ENCODE measurements at regions of chr10 and their contacts with region 1.

Region 1: DNA sequence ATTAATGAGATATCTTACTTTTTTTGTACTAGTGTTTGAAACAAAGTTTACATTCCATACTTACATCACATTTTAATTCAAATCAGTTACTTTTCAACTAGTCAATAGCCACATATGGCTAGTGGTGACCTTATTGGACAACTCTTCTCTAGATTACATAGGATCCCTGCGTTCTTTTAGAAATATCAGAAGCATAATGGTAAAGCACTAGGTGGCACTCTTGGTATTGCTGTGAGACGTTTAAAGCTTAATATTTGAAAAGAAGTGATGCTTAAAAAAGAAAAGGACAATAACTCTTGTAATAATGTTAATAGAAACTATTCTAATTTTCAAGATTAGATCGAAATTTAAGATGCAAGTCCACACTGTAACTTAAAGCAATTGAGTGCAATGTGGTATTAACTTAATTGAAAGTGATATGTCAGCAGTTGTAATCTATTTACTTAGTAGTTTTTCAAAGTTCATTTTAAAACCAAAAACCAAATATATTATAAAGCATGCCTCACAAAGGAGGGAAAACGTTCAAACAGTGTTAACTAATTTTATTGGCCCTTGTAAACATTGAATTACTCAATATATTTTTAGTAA is 339.1 kb downstream of the ATRNL1 start:
- DNase-seq: peak; percentile 25
- H3K4me3 Mint-ChIP-seq: no peak overlapping the region
- H3K27ac Mint-ChIP-seq: no peak overlapping the region
- H3K4me1 Mint-ChIP-seq: no peaks in the 10 kb centered on the region
- H3K27me3 Mint-ChIP-seq: peaks cover 31% of the 10 kb centered on the region
- CTCF ChIP-seq: peak; percentile 43

Region 2: DNA sequence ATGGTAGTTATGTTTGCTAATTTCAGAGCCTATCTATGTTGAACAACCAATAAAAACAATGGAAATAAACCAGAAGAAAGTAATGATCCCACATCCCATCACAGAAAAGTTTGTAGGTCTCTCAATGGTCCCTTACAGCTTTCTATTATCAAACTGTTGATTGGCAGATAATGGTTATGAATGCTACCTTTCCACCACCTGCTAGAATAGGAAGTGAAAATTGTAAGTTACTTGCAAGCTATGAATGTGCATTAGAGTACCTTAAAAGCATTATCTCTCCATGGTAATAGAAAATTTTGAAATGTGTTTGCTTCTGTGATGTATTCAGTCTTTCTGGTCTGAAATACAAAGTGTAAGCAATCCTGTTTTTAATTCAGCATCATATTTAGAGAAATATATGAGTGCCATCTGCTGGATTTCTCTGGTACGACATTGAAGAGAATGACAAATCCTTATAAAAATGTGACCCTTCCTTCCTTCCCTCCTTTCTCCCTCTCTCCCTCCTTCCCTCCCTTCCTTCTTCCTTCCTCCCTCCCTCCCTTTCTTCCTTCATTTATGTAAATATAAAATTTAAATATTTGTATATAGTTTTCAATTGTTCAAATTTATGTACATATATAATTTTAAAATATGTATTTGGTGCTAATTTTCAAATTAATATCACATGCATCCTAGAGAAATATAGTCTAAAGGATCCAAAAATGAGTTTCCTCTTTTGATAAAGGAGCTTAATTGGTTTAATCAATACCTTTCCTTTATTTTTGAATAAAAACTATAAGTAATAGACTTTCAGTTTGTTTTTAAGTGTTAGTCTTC is 953.9 kb after region 1 on chr10:
- CTCF ChIA-PET with region 1: interaction called, 5 read pairs
- POLR2A ChIA-PET with region 1: no interaction called
- intact Hi-C with region 1: loop called (anchors 1 kb)
- DNase-seq: peak; percentile 45
- H3K4me3 Mint-ChIP-seq: no peak overlapping the region
- H3K27ac Mint-ChIP-seq: no peak overlapping the region
- H3K4me1 Mint-ChIP-seq: no peaks in the 10 kb centered on the region
- H3K27me3 Mint-ChIP-seq: no peaks in the 10 kb centered on the region
- CTCF ChIP-seq: peak; percentile 59

Measured in MCF 10A (cell line).